ENCODE measurements at regions of chr1 and their contacts with region 1.

Region 1: GRCh38 chr1:6245086-6245868 is 1.3 kb downstream of the HES3 start:
- DNase-seq: peak; percentile 84 to 94 (median 93)
- ATAC-seq: peak; percentile 75 to 85
- H3K4me3 ChIP-seq: no peak overlapping the region
- H3K27ac ChIP-seq: no peak overlapping the region
- H3K4me1 ChIP-seq: no peaks in the 10 kb centered on the region
- H3K27me3 ChIP-seq: no peaks in the 10 kb centered on the region

Region 2: DNA sequence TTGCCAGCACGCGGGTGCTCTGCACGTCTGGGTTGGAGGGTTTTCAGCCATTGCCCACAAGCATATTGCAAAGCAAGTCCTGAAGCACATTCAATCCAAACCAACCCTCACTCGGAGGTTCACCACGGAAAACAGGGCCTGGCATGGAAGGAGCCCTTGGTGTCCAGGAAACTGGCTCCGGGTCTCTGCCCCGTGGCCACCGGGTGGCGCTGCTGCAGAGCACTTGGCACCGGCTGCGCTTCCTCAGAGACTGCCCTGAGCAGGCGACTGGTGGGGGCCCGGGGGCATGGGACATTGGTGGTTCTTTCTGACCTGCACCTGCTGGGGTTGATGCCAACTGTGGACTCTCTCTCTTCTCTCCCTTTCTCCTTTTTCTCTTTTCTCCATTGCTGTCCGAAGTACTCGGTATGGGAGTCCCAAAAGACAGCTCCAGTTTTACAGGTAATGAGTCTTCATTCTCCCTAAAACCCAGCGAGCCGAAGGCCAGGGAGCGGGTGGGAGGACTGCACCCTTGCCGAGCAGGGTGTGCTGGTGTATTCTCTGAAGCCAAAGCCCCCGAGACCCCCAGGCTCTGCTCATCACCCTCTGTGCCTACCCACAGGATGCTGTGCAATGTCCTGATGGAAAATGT is 203.7 kb before region 1 on chr1:
- intact Hi-C with region 1: loop called in 1 of 4 experiments (anchors 10 kb)
- DNase-seq: peak in 2 of 3 donors; percentile 71 to 77
- ATAC-seq: peak in 1 of 2 donors; percentile 42
- H3K4me3 ChIP-seq: no peak overlapping the region
- H3K27ac ChIP-seq: no peak overlapping the region
- H3K4me1 ChIP-seq: no peaks in the 10 kb centered on the region
- H3K27me3 ChIP-seq: no peaks in the 10 kb centered on the region

Region 3: DNA sequence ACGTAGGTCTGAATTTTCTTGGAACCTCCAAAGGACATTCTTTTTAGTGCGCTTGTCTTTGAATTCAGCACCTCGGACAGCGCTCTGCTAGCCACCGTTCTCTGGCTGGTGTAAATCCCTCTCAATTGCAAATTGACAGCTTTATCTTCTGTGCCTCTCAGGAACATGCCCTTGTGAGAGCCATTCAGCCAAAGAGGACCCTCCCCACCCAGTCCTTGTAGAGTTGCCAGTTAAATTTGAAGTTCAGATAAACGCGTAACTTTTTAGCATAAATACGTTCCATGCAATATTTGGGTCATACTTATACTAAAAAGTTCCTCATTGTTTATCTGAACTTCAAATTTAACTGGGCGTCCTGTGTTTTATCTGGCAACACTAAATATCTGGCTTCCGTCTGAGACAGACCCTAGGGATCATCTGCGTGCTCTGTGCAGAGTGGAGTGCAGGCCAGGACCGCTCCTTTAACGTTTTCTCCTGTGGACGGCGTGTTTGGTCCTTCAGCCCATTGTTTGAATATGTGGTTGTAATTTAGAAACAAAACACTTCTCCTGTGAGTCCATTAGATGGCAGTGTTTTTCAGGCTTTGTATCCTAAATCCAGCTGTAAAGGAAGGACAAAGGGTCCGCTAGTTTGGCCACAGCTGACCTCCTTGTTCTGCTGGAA is 192.6 kb before region 1 on chr1:
- intact Hi-C with region 1: loop called (anchors 2 to 10 kb)
- DNase-seq: peak; percentile 70 to 87 (median 82)
- ATAC-seq: peak; percentile 44 to 64
- H3K4me3 ChIP-seq: no peak overlapping the region
- H3K27ac ChIP-seq: no peak overlapping the region
- H3K4me1 ChIP-seq: peaks cover 2% of the 10 kb centered on the region
- H3K27me3 ChIP-seq: no peaks in the 10 kb centered on the region

Region 4: DNA sequence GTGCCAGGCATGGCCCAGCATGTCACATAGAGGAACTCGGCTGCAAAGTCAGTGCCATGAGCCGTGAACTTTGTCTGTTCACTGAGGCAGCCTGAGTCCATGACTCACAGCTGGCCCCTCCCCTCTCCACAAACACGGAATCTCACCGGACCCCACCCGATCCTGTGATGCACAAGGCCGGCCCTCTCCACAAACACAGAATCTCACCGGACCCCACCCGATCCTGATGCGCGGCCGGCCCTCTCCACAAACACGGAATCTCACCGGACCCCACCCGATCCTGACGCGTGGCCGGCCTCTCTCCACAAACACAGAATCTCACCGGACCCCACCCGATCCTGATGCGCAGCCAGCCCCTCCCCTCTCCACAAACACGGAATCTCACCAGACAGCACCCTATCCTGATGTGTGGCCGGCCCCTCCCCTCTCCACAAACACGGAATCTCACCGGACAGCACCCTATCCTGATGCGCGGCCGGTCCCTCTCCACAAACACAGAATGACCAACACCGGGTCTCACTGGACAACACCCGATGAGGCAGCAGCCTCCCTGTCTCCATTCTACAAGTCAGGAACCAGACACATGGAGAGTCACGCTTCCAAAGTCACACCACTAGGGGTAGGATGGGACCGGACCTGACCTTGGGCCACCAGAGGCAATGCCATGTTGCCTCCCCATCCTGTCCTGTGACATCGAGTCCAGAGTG is 55.2 kb after region 1 on chr1:
- intact Hi-C with region 1: no loop called
- DNase-seq: no peak
- ATAC-seq: peak in 1 of 2 donors; percentile 31
- H3K4me3 ChIP-seq: no peak overlapping the region
- H3K27ac ChIP-seq: no peak overlapping the region
- H3K4me1 ChIP-seq: no peaks in the 10 kb centered on the region
- H3K27me3 ChIP-seq: no peaks in the 10 kb centered on the region

Region 5: GRCh38 chr1:6343506-6344405 is 98.5 kb after region 1 on chr1:
- intact Hi-C with region 1: loop called (anchors 2 kb)
- DNase-seq: peak; percentile 67 to 87 (median 85)
- ATAC-seq: peak; percentile 74 to 81
- H3K4me3 ChIP-seq: no peak overlapping the region
- H3K27ac ChIP-seq: no peak overlapping the region
- H3K4me1 ChIP-seq: no peaks in the 10 kb centered on the region
- H3K27me3 ChIP-seq: no peaks in the 10 kb centered on the region

Region 6: DNA sequence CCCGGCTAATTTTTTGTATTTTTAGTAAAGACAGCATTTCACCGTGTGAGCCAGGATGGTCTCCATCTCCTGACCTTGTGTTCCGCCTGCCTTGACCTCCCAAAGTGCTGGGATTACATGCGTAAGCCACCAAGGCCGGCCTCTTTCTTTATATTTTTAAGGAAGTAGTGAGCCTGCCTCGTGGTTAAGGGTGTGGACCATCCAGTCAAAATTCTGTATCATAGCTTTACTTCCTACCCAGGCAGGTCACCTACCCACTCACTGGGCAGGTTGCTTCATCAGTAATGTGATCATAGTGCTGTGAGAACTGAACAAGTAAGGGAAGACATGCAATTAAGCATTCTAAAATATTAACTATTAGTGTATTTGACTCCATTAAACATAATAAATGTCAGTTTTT is 156.4 kb after region 1 on chr1:
- intact Hi-C with region 1: loop called (anchors 2 to 5 kb)
- DNase-seq: no peak
- ATAC-seq: no peak
- H3K4me3 ChIP-seq: no peak overlapping the region
- H3K27ac ChIP-seq: no peak overlapping the region
- H3K4me1 ChIP-seq: no peaks in the 10 kb centered on the region
- H3K27me3 ChIP-seq: no peaks in the 10 kb centered on the region

Region 7: GRCh38 chr1:6409053-6409452 is 163.8 kb after region 1 on chr1:
- intact Hi-C with region 1: loop called (anchors 2 to 5 kb)
- DNase-seq: no peak
- ATAC-seq: no peak
- H3K4me3 ChIP-seq: no peak overlapping the region
- H3K27ac ChIP-seq: no peak overlapping the region
- H3K4me1 ChIP-seq: no peaks in the 10 kb centered on the region
- H3K27me3 ChIP-seq: no peaks in the 10 kb centered on the region

Region 8: DNA sequence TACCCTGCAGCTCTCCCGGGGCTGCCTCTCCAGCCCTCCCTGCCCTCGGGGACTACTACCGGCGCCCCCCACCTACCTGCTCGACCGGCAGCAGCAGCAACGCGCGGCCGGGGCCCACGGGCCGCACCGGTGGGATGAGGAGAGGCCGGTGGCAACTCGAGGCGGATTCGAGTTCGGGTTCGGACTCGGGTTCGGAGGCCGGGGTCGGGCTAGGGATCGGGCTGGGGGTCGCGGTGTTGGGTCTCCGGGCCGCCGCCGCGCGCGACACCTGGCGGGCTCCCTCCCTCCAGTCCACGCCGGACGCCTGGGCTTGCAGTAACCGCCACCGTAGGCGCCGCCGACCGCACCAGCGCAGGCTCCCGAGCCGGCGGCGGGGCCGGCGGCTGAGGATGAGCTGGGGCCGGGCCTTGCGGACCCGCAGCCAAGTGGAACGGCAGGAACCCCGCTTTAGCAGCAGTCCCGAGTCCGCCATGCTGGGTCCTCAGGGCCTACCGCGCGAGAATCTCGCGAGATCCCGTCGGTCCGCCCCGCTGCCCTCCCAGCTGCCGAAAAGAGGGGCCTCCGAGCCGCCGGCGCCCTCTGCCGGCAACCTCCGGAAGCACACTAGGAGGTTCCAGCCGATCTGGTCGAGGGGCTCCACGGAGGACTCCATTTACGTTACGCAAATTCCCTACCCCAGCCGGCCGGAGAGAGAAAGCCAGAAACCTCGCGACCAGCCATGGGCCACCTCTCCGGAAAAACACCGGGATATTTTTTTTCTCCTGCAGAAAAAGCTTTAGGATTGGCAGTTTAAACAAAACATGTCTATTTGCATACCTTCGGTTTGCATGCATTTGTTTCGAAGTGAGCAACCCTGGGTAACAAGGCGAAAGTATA is 309.0 kb after region 1 on chr1 and contains the start of gene NOL9:
- intact Hi-C with region 1: no loop called
- DNase-seq: peak; percentile 95 to 99 (median 98)
- ATAC-seq: peak; percentile 97
- H3K4me3 ChIP-seq: peak within 1 kb of the TSS; percentile 82
- H3K27ac ChIP-seq: peak within 1 kb of the TSS; percentile 54
- H3K4me1 ChIP-seq: peaks cover 2% of the 10 kb centered on the region
- H3K27me3 ChIP-seq: no peaks in the 10 kb centered on the region
- total RNA-seq, gene NOL9: 12.8 to 17.1 (median 15.6) TPM